Mucosa of descending colon (tissue), 3 donors: ENCODE measurements at regions of chrX and their contacts with region 1.

Region 1: DNA sequence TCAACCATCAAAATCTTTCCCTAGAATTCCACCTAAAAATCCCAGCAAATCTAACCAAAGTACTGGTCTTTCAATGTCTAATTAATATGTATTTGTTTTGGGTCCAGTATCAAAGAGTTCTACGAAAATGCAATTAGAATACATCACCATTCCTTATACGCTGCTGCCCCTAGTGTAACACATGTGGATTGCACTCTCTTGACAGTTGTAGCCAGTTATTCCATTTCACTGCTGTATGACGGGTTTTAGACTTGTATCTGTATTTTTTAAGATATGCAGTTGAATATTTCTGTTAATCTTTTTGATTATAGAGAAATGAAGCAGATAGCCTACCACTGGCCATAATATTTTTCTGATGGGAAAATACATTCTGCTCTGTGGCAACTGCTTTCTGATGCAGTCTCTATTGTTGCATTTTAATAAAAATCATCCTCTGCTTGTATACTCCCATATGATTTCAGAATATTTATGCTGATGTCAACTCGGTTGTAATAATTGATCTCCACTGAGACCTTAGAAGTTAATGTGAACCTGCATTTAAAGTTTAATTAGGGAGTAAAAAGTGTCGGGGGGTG is 17.1 kb upstream of the PAGE2B start:
- DNase-seq: peak in 1 of 3 donors; percentile 47
- ATAC-seq: peak; percentile 75
- H3K4me3 ChIP-seq: no peak overlapping the region
- H3K4me1 ChIP-seq: no peaks in the 10 kb centered on the region
- CTCF ChIP-seq: peak; percentile 49

Region 2: GRCh38 chrX:54891573-54891972 is 166.2 kb before region 1 on chrX:
- intact Hi-C with region 1: loop called in 1 of 2 experiments (anchors 10 kb)
- DNase-seq: peak in 1 of 3 donors; percentile 67
- ATAC-seq: peak; percentile 67
- H3K4me3 ChIP-seq: no peak overlapping the region
- H3K4me1 ChIP-seq: no peaks in the 10 kb centered on the region
- CTCF ChIP-seq: no peak